Common myeloid progenitor, CD34-positive (primary cell): ENCODE measurements at regions of chr6 and their contacts with region 1.

Region 1: GRCh38 chr6:157045831-157046454 is 268.8 kb downstream of the ARID1B start:
- DNase-seq: peak in 2 of 3 donors; percentile 33
- H3K4me3 ChIP-seq: no peak overlapping the region
- H3K27ac ChIP-seq: no peak overlapping the region
- H3K4me1 ChIP-seq: peaks cover 0 to 5% (median 0%) of the 10 kb centered on the region in 4 experiments
- H3K27me3 ChIP-seq: no peaks in the 10 kb centered on the region

Region 2: GRCh38 chr6:157034436-157035230 is 11.3 kb before region 1 on chr6:
- CTCF ChIA-PET with region 1: interaction called, 27 read pairs
- POLR2A ChIA-PET with region 1: interaction called, 4 read pairs
- DNase-seq: peak; percentile 66 to 79 (median 77)
- H3K4me3 ChIP-seq: peak overlapping the region in 1 of 7 experiments; percentile 78
- H3K27ac ChIP-seq: no peak overlapping the region
- H3K4me1 ChIP-seq: peaks cover 20 to 45% (median 25%) of the 10 kb centered on the region in 4 experiments
- H3K27me3 ChIP-seq: no peaks in the 10 kb centered on the region

Region 3: DNA sequence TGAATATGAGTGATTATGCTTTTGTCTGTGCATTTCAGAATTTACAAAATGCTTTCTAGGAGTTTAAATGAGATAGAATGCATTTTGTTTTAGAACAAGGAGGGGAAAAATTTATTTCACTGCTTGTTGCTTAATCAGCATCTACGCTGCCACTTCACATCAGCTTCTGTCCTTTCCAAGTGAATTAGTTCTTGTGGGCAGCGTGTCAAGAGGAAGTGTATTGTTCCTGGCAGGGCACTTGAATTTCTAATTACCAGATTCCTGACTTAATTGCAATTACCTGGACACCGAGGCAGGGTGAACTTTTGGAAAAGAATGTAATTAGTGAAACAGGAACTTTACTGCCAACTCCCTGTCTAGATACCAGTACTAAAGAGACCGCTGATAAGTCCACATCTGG is 13.8 kb after region 1 on chr6:
- CTCF ChIA-PET with region 1: interaction called, 30 read pairs
- POLR2A ChIA-PET with region 1: interaction called, 3 read pairs
- DNase-seq: peak in 1 of 3 donors; percentile 45
- H3K4me3 ChIP-seq: no peak overlapping the region
- H3K27ac ChIP-seq: no peak overlapping the region
- H3K4me1 ChIP-seq: peaks cover 3 to 41% (median 28%) of the 10 kb centered on the region in 4 experiments
- H3K27me3 ChIP-seq: no peaks in the 10 kb centered on the region

Region 4: GRCh38 chr6:157068691-157069324 is 22.9 kb after region 1 on chr6:
- CTCF ChIA-PET with region 1: interaction called, 14 read pairs
- POLR2A ChIA-PET with region 1: no interaction called
- DNase-seq: no peak
- H3K4me3 ChIP-seq: no peak overlapping the region
- H3K27ac ChIP-seq: no peak overlapping the region
- H3K4me1 ChIP-seq: peaks cover 26 to 56% (median 39%) of the 10 kb centered on the region in 4 experiments
- H3K27me3 ChIP-seq: no peaks in the 10 kb centered on the region

Region 5: DNA sequence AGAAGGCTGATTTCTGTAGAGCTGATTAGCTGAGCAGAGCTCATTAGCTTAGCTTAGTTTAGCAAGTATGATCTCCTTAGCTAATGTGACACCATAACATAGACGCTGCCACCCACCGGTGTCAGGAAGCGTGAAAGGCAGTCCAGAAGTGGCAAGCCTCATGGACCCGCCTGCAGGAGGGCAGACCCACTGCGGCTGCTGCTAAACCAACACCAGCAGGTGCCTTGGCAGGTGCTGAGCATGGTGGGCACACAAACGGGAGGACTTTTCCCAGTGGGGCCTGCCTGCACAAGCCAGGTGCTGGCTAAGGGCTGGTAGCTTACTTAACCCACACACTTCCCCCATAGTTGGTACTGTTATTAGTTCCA is 357.7 kb after region 1 on chr6:
- CTCF ChIA-PET with region 1: no interaction called
- POLR2A ChIA-PET with region 1: no interaction called
- DNase-seq: no peak
- H3K4me3 ChIP-seq: no peak overlapping the region
- H3K27ac ChIP-seq: no peak overlapping the region
- H3K4me1 ChIP-seq: no peaks in the 10 kb centered on the region
- H3K27me3 ChIP-seq: no peaks in the 10 kb centered on the region